ENCODE measurements at regions of chr11 and their contacts with region 1.

Region 1: DNA sequence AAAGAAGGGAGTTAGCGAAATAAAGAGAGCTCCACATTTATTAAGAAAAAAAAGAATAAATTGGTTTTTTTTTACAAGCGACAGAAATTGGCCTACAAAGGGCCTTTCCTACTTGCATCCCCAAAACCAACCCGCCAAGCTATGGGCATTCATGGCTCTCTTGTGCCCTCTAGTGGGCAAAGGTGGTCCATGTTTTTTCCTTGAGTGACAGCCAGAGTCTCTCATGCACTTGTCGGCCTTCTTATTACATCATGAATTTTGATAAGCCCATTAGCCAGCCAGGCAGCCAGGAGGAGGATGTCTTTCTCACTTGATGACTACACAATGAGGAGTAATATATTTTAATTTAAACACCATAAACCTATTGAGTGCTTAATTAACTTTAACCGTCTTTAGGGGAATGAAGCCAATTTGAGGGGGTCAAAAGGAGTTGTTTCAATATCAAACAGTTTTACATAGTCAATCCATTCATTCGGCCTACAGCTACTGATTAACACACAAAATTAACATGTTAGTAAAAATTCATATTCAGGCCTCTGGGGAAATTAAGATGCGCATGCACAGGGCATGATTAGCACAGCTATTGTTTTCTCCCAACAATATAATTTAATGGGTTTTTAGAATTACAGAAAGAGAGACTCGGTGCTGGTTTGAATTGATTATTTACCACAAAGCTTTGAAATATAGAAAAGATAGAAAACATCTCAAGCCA is 85.5 kb downstream of the RCN1 start:
- DNase-seq: peak; percentile 64
- ATAC-seq: peak; percentile 88
- H3K4me3 ChIP-seq: no peak overlapping the region
- H3K27ac ChIP-seq: no peak overlapping the region
- H3K4me1 ChIP-seq: no peaks in the 10 kb centered on the region; the same call in 1 of the 2 replicates
- H3K27me3 ChIP-seq: no peaks in the 10 kb centered on the region
- CTCF ChIP-seq: peak; percentile 74 to 96 (median 77)
- EP300 ChIP-seq: no peak
- POLR2A ChIP-seq: no peak
- RAD21 ChIP-seq: peak; percentile 99

Region 2: DNA sequence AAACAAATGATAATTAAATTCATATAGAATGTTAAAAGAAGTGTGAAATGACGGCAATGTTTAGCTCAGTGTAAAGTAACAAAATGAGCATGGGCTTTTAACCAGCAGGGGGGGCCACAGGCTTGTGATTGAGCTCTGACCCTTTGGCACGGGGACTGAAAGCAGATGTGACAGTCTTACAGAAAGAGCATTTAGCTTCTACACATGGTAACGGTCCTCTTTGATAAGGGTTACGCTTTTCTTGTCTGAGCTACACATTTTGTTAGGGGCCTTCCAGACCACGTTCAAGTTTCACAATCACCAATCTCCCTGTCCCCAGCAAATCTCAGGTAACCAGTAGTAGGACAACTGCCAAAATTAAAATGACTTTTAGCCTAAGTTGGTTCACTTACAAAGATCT is 1069.3 kb before region 1 on chr11:
- CTCF ChIA-PET with region 1: interaction called, 34 read pairs
- POLR2A ChIA-PET with region 1: no interaction called
- RAD21 ChIA-PET with region 1: interaction called, 14 read pairs
- SMC1A ChIA-PET with region 1: interaction called, 26 read pairs
- in situ Hi-C with region 1: loop called (anchors 5 kb)
- intact Hi-C with region 1: loop called (anchors 5 kb)
- DNase-seq: no peak
- ATAC-seq: peak; percentile 98
- H3K4me3 ChIP-seq: no peak overlapping the region
- H3K27ac ChIP-seq: no peak overlapping the region
- H3K4me1 ChIP-seq: no peaks in the 10 kb centered on the region
- H3K27me3 ChIP-seq: no peaks in the 10 kb centered on the region
- CTCF ChIP-seq: peak; percentile 64 to 78 (median 77)
- EP300 ChIP-seq: no peak
- POLR2A ChIP-seq: no peak
- RAD21 ChIP-seq: peak; percentile 86

Region 3: GRCh38 chr11:31397239-31397834 is 779.0 kb before region 1 on chr11:
- CTCF ChIA-PET with region 1: interaction called, 8 read pairs
- POLR2A ChIA-PET with region 1: no interaction called
- RAD21 ChIA-PET with region 1: no interaction called
- SMC1A ChIA-PET with region 1: interaction called, 9 read pairs
- in situ Hi-C with region 1: no loop called
- intact Hi-C with region 1: loop called (anchors 5 kb)
- DNase-seq: no peak
- ATAC-seq: peak; percentile 70
- H3K4me3 ChIP-seq: no peak overlapping the region
- H3K27ac ChIP-seq: no peak overlapping the region
- H3K4me1 ChIP-seq: no peaks in the 10 kb centered on the region
- H3K27me3 ChIP-seq: no peaks in the 10 kb centered on the region
- CTCF ChIP-seq: peak; percentile 43 to 72 (median 55); a peak in 5 of 6 replicates
- EP300 ChIP-seq: no peak
- POLR2A ChIP-seq: no peak
- RAD21 ChIP-seq: peak; percentile 78

Region 4: GRCh38 chr11:31887180-31887579 is 289.2 kb before region 1 on chr11:
- CTCF ChIA-PET with region 1: no interaction called
- POLR2A ChIA-PET with region 1: no interaction called
- RAD21 ChIA-PET with region 1: no interaction called
- SMC1A ChIA-PET with region 1: no interaction called
- in situ Hi-C with region 1: no loop called
- intact Hi-C with region 1: loop called (anchors 10 kb)
- DNase-seq: no peak
- ATAC-seq: no peak
- H3K4me3 ChIP-seq: no peak overlapping the region
- H3K27ac ChIP-seq: no peak overlapping the region
- H3K4me1 ChIP-seq: no peaks in the 10 kb centered on the region
- H3K27me3 ChIP-seq: peaks cover 3 to 4% of the 10 kb centered on the region in 2 experiments; a peak in 3 of 4 replicates
- CTCF ChIP-seq: peak in 2 of 3 experiments; percentile 5 to 29; a peak in 2 of 6 replicates
- EP300 ChIP-seq: no peak
- POLR2A ChIP-seq: no peak
- RAD21 ChIP-seq: no peak

Region 5: DNA sequence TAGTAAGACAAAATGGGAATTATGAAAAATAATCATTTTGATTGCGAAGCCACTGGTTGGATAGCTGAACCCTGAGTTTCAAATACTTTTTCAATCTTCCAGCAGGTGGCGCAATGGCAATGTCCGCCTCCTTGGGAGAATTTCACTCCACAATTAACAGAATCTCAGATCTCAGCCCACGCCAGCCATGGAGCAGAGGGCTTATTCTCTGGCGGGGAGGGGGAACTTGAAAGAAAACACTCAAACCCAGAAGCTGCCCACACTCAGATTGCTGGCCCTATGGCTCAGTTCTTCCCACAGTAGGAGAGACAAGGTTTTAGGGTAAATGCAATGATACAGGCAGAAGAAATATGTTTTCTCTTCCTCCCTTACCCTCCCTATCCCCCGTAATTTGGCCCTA is 124.2 kb before region 1 on chr11:
- CTCF ChIA-PET with region 1: interaction called, 306 read pairs
- POLR2A ChIA-PET with region 1: no interaction called
- RAD21 ChIA-PET with region 1: interaction called, 50 read pairs
- SMC1A ChIA-PET with region 1: interaction called, 205 read pairs
- in situ Hi-C with region 1: loop called (anchors 5 kb)
- intact Hi-C with region 1: loop called (anchors 1 kb)
- DNase-seq: no peak
- ATAC-seq: peak; percentile 87
- H3K4me3 ChIP-seq: no peak overlapping the region
- H3K27ac ChIP-seq: no peak overlapping the region
- H3K4me1 ChIP-seq: no peaks in the 10 kb centered on the region
- H3K27me3 ChIP-seq: no peaks in the 10 kb centered on the region
- CTCF ChIP-seq: peak; percentile 63 to 77 (median 64)
- EP300 ChIP-seq: no peak
- POLR2A ChIP-seq: no peak
- RAD21 ChIP-seq: peak; percentile 84

Region 6: DNA sequence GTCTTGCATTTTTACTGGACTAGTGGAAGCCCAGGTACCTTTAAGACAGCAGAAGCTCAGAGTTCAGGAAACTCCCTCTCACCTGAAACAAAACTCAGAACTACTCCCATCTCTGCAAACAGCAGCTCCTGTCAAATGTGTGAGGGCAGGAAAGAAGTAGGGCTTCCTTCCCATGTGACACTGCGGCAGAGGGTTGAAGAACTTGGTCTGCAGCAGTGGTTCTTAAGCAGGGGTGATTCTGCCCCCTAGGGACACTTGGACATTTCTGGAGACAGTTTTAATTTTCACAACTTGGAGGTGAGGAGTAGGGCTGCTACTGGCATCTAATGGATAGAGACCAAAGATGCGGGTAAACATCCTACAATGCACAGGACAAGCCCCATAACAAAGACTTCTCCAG is 22.1 kb before region 1 on chr11:
- CTCF ChIA-PET with region 1: interaction called, 23 read pairs
- POLR2A ChIA-PET with region 1: interaction called, 6 read pairs
- RAD21 ChIA-PET with region 1: interaction called, 9 read pairs
- SMC1A ChIA-PET with region 1: interaction called, 11 read pairs
- in situ Hi-C with region 1: no loop called
- intact Hi-C with region 1: no loop called
- DNase-seq: peak; percentile 62
- ATAC-seq: peak; percentile 72
- H3K4me3 ChIP-seq: no peak overlapping the region
- H3K27ac ChIP-seq: peak overlapping the region; percentile 42; the same call in 1 of the 2 replicates
- H3K4me1 ChIP-seq: peaks cover 6% of the 10 kb centered on the region; the same call in 1 of the 2 replicates
- H3K27me3 ChIP-seq: no peaks in the 10 kb centered on the region
- CTCF ChIP-seq: peak in 2 of 3 experiments; percentile 13 to 46; a peak in 2 of 6 replicates
- EP300 ChIP-seq: no peak
- POLR2A ChIP-seq: no peak
- RAD21 ChIP-seq: peak; percentile 64

Region 7: DNA sequence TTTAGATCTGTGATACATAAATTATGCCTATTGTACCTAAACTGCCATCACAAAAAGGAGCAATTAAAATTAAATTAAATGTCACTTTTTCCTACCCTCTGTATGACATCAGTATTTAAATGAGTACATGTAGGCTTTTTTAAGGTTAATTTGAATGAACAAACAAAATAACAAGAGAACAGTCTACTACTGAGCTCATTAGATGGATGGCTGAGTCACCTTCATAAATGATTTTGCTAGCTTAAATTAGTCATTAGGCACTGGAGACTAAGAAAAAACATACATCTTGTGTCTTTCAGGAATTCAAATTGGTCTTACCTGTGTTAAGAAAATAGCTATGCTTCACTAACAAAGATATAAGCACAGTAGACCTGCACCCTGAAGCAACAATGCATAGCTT is 68.1 kb after region 1 on chr11:
- CTCF ChIA-PET with region 1: no interaction called
- POLR2A ChIA-PET with region 1: no interaction called
- RAD21 ChIA-PET with region 1: no interaction called
- SMC1A ChIA-PET with region 1: no interaction called
- in situ Hi-C with region 1: no loop called
- intact Hi-C with region 1: no loop called
- DNase-seq: no peak
- ATAC-seq: no peak
- H3K4me3 ChIP-seq: no peak overlapping the region
- H3K27ac ChIP-seq: no peak overlapping the region
- H3K4me1 ChIP-seq: no peaks in the 10 kb centered on the region
- H3K27me3 ChIP-seq: no peaks in the 10 kb centered on the region
- CTCF ChIP-seq: no peak
- EP300 ChIP-seq: no peak
- POLR2A ChIP-seq: no peak
- RAD21 ChIP-seq: no peak

Measured in GM12878 (cell line).